CD8-positive, alpha-beta T cell (primary cell): ENCODE measurements at regions of chr1 and their contacts with region 1.

Region 1: GRCh38 chr1:112882271-112882744 is 73.7 kb downstream of the SLC16A1 start:
- DNase-seq: no peak
- ATAC-seq: no peak
- H3K4me3 ChIP-seq: no peak overlapping the region
- H3K4me3 Mint-ChIP-seq: no peak overlapping the region
- H3K27ac ChIP-seq: no peak overlapping the region
- H3K27ac Mint-ChIP-seq: peak overlapping the region; percentile 37
- H3K4me1 ChIP-seq: no peaks in the 10 kb centered on the region
- H3K4me1 Mint-ChIP-seq: no peaks in the 10 kb centered on the region
- H3K27me3 ChIP-seq: no peaks in the 10 kb centered on the region
- H3K27me3 Mint-ChIP-seq: peaks cover 3% of the 10 kb centered on the region
- CTCF ChIP-seq: no peak

Region 2: DNA sequence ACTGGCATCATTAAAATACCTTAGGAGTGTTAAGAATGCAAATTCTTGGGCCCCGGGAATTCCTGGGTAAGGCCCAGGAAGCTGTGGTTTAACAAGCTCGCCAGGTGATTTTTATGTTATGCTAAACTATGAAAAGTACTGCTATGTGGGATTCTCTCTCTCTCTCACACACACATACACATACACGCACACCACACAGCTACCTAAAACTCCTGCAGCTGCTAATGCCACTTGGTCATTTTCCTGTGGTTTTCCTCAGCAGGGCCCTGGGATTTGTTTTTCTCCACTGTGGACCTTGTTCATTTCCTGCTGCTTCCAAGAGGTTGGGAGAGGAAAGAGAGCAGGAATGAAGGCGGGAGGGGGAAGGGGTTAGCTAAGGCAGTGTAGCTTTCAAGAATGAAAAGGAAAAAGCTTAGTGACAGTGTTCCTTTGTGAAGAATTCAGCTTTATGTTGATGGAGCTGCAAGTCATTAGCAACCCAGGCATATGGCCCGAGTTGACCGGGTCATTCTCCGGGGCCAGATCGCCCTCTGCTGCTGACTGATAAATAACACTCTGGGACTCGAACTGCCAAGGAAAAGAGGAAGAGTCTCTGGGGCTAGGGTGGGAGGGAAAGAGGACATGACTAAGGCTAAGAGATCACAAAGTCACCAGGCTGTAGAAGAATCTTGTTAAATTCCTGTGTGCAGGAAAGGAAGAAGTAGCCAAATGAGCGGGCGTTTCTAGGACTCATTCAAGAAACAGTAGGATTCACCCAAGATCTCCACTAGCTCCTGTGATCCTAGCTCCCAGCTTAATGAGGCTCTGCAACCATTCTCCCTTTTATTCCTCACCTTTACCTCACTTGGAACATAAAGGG is 160.2 kb after region 1 on chr1:
- CTCF ChIA-PET with region 1: interaction called, 10 read pairs
- POLR2A ChIA-PET with region 1: no interaction called
- intact Hi-C with region 1: no loop called
- DNase-seq: peak in 3 of 9 experiments; percentile 7 to 41 (median 29)
- ATAC-seq: no peak
- H3K4me3 ChIP-seq: no peak overlapping the region
- H3K4me3 Mint-ChIP-seq: no peak overlapping the region
- H3K27ac ChIP-seq: no peak overlapping the region
- H3K27ac Mint-ChIP-seq: peak overlapping the region; percentile 33
- H3K4me1 ChIP-seq: peaks cover 25% of the 10 kb centered on the region
- H3K4me1 Mint-ChIP-seq: peaks cover 31% of the 10 kb centered on the region
- H3K27me3 ChIP-seq: no peaks in the 10 kb centered on the region
- H3K27me3 Mint-ChIP-seq: no peaks in the 10 kb centered on the region
- CTCF ChIP-seq: no peak

Region 3: GRCh38 chr1:113178522-113178921 is 296.2 kb after region 1 on chr1:
- CTCF ChIA-PET with region 1: no interaction called
- POLR2A ChIA-PET with region 1: no interaction called
- intact Hi-C with region 1: no loop called
- DNase-seq: no peak
- ATAC-seq: no peak
- H3K4me3 ChIP-seq: no peak overlapping the region
- H3K4me3 Mint-ChIP-seq: no peak overlapping the region
- H3K27ac ChIP-seq: no peak overlapping the region
- H3K27ac Mint-ChIP-seq: no peak overlapping the region
- H3K4me1 ChIP-seq: no peaks in the 10 kb centered on the region
- H3K4me1 Mint-ChIP-seq: no peaks in the 10 kb centered on the region
- H3K27me3 ChIP-seq: no peaks in the 10 kb centered on the region
- H3K27me3 Mint-ChIP-seq: peaks cover 16% of the 10 kb centered on the region
- CTCF ChIP-seq: no peak